Aorta (tissue), 5 donors: ENCODE measurements at regions of chr3 and their contacts with region 1.

Region 1: DNA sequence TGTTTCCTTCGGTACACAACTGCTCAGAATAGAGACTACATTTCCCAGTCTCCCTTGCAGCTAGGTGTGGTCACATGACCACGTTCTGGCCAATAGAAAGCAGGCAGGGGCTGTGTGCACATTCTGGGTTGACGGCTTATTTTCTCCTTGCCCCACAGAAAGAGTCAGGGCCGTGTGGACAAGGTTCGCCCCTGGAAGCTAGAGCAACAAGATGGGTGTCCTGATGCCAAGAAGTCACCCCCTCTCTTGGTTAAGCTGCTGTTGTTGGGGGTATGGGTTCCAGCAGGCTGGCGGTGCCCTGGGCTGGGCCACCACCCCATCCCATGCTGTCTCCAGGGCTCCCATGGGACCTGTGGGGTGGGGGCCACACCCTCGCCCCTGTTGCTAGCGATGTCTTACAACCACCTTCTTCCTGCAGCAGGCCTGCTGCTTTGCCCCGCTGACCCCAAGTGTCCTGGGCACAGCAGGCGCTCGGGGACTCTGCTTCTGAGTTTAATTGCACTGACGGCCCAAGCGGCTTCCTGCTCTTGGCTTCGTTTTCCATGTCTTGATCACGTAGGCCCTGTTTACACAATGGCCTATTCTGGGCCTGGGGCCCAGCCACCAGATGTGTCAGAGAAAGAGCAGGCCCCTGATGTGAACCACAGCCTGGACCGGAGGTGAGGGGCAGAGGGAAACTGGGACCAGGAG is 24.9 kb downstream of the ABTB1 start:
- DNase-seq: peak; percentile 91 to 92
- ATAC-seq: peak; percentile 87
- H3K4me3 ChIP-seq: no peak overlapping the region
- H3K27ac ChIP-seq: peak overlapping the region; percentile 50 to 97
- H3K4me1 ChIP-seq: peaks cover 0 to 2% of the 10 kb centered on the region in 2 donors
- H3K27me3 ChIP-seq: no peaks in the 10 kb centered on the region

Region 2: GRCh38 chr3:127525373-127525772 is 172.3 kb before region 1 on chr3:
- intact Hi-C with region 1: no loop called
- DNase-seq: no peak
- ATAC-seq: no peak
- H3K4me3 ChIP-seq: no peak overlapping the region
- H3K27ac ChIP-seq: no peak overlapping the region
- H3K4me1 ChIP-seq: peaks cover 0 to 3% of the 10 kb centered on the region in 2 donors
- H3K27me3 ChIP-seq: no peaks in the 10 kb centered on the region

Region 3: GRCh38 chr3:127735767-127736704 is 38.3 kb after region 1 on chr3:
- intact Hi-C with region 1: loop called (anchors 5 kb)
- DNase-seq: no peak
- ATAC-seq: peak; percentile 61
- H3K4me3 ChIP-seq: no peak overlapping the region
- H3K27ac ChIP-seq: no peak overlapping the region
- H3K4me1 ChIP-seq: peaks cover 5% of the 10 kb centered on the region in 2 donors
- H3K27me3 ChIP-seq: no peaks in the 10 kb centered on the region

Region 4: DNA sequence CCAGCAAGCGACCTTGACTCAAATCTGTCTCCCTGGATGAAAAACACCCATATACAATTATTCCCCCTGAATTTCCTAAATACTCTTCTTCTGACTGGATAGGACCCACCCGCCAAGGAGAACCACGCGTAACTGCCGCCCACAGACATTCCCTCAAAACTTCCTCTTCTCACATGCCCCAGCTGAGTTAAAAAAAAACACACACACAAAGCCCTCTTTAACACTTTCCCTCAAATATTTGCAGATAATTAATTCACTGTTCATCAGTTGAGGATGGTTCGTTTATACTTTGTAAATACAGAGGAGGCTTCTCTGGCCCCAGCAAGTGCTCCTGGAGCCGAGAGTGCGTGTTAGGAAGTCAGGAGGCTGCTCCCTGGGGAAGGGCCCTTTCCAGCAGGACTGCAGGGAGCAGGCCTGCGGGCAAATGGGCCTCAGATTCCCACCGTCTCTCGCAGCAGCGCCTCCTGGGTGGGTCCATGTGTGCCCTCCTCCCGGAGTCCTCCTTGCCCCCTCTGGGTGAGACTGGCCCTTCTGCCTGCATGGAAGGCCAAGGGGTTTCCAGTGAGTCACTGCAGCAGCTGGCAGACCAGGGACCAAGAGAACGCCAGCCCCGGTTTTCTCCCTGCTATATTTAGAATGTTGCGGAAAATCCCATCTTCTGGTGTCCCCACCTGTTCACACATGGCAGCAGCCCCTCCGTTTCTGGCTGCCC is 77.9 kb after region 1 on chr3:
- intact Hi-C with region 1: loop called in 1 of 2 experiments (anchors 5 kb)
- DNase-seq: peak; percentile 71 to 86
- ATAC-seq: peak; percentile 70
- H3K4me3 ChIP-seq: no peak overlapping the region
- H3K27ac ChIP-seq: peak overlapping the region in 1 of 2 donors; percentile 62
- H3K4me1 ChIP-seq: peaks cover 0 to 3% of the 10 kb centered on the region in 2 donors
- H3K27me3 ChIP-seq: no peaks in the 10 kb centered on the region

Region 5: GRCh38 chr3:127822698-127823425 is 125.2 kb after region 1 on chr3:
- intact Hi-C with region 1: loop called (anchors 2 to 5 kb)
- DNase-seq: peak; percentile 79 to 88
- ATAC-seq: peak; percentile 89
- H3K4me3 ChIP-seq: peak overlapping the region; percentile 74 to 89
- H3K27ac ChIP-seq: peak overlapping the region; percentile 48 to 62
- H3K4me1 ChIP-seq: peaks cover 0 to 3% of the 10 kb centered on the region in 2 donors
- H3K27me3 ChIP-seq: no peaks in the 10 kb centered on the region

Region 6: DNA sequence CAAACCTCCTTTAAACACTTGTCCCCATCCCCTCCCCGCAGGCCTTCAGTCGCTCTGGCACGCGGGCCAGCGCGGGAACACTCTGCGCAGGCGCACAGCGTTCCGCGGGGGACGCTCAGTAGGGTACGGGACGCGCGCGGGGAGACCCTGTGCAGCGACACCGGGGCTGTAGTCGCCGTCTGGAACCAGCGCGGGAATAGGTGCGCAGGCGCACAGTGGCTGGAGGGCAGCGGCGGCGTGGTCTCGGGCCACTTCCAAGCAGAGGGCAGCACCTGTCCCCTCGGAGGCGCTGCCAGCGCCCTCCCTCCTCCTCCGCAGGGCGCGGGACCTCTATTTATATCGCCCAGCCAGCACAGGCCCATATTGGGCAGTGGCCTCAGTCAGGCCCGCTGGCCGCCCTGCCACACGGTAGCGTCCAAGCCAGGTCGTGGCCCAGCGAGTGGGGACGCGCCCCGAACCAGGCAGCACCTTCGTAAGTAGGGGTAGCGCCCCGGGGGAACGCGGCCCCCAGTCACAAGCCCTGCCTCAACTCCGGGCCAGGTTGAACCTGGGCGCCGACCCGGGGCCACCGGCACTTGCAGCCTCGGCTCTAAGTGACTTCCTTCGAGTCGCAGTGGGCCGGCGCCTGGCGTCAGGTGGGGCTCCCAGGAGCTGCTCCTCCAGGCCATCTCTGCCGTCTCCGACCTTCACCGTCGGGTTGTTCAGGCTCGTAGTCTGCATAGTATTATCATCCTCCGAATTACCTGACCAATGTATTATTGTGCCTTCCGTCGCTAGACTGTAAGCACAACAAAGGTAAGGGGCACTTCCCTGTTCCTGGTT is 217.6 kb after region 1 on chr3 and contains the start of gene KBTBD12:
- intact Hi-C with region 1: loop called in 1 of 2 experiments (anchors 10 kb)
- DNase-seq: peak; percentile 70 to 88
- ATAC-seq: peak; percentile 84
- H3K4me3 ChIP-seq: peak within 1 kb of the TSS; percentile 39 to 40
- H3K27ac ChIP-seq: peak within 1 kb of the TSS; percentile 65 to 72
- H3K4me1 ChIP-seq: no peaks in the 10 kb centered on the region
- H3K27me3 ChIP-seq: no peaks in the 10 kb centered on the region
- total RNA-seq, gene KBTBD12: 4.5 to 7.6 TPM

Region 7: DNA sequence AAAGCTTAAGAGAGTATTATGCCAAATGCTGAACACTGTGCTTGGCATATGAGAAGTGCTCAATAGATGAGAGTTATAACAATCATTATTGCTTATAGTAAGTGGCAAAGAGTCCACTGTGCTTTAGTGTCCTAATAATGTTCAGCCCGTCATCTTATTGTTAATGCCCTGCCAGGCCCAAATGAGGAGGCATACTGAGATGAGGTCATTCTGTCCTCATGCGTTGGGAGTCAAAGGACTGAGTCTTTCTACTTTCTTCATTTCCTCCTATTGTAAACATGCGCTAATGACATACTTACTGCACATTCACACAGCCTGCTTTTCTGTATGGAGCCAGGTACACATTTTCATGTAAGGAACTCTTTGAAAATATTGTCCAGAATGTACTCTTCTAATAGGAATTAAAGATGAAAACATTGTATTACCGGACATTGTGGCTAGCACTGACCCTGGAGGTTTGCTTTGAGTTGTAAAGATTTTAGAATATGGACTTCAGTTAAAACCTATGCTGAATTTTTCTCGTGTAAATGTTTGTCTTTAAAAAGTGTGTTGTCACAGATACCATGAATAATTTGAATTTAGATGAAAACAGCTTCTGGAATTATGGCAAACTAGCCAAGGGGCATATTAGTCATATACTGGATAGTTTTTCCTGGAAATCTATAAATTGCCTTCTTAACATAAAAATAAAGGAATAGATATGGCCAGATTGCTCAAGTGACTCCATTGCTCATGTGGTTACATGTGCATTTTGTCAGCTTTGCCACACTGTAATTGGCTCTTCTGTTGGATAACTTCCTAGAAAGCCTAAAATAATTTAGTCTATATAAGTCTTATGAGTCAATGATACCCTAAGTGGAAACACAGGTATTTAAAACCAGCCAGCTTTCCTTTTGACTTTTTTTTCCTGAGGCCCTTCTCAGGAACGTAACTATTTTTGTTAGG is 255.7 kb after region 1 on chr3:
- intact Hi-C with region 1: loop called in 1 of 2 experiments (anchors 5 kb)
- DNase-seq: no peak
- ATAC-seq: no peak
- H3K4me3 ChIP-seq: no peak overlapping the region
- H3K27ac ChIP-seq: peak overlapping the region in 1 of 2 donors; percentile 28
- H3K4me1 ChIP-seq: no peaks in the 10 kb centered on the region
- H3K27me3 ChIP-seq: no peaks in the 10 kb centered on the region